K562 (cell line): ENCODE measurements at regions of chr3 and their contacts with region 1.

Region 1: DNA sequence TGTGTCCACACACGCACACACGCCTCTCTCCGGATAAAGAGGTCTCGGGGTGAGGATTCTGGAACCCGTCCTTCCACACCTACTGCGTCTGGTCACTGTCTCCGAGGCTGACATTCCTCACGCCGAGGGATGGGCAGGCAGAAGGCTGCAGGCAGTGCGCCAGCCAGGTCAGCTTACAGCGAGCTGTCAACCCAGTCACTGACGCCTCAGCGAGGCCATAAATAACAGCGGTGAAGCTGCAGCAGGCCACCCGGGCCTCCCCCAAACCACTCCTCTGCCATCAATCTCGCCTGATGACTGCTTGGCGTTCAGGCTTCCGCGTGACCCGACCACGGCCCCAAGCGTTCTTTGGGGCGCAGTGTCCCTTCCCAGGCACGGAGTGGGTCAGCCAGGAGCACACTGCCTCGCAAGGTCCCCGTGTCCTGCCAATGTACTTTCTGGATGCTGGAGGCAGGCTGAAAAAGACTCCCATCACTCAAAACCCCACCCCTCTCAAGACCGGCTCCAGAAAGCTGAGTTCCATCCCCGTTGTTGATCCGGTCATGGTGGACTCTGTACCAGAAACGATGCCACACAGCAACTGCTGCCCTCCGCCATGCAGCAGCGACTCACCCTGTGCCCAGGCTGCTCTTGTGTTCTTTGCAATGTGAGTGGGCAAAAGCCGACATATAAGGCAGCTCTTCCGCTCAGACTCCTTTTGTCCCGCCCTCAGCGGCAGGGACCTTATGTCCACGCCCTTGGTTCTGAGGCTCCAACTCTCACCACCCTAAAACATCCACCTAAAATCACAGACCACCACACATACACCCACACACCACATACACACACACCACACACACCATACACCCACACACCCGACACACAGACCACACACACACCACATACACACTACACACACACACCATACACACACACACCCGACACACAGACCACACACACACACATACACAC is 27.1 kb downstream of the CPN2 start:
- DNase-seq: peak; percentile 75 to 93 (median 84)
- ATAC-seq: peak; percentile 94
- H3K4me3 ChIP-seq: peak overlapping the region; percentile 37
- H3K27ac ChIP-seq: peak overlapping the region; percentile 42; the same call in 2 of the 3 replicates
- H3K4me1 ChIP-seq: peaks cover 13 to 54% of the 10 kb centered on the region in 2 experiments; a peak in 4 of 5 replicates
- H3K27me3 ChIP-seq: peaks cover 0 to 23% of the 10 kb centered on the region in 2 experiments; a peak in 3 of 5 replicates
- CTCF ChIP-seq: peak in 2 of 3 experiments; percentile 13 to 19; a peak in 2 of 6 replicates
- EP300 ChIP-seq: peak; percentile 82
- POLR2A ChIP-seq: no peak
- RAD21 ChIP-seq: peak; percentile 11 to 56; a peak in 2 of 4 replicates

Region 2: GRCh38 chr3:193592944-193593667 is 731.0 kb before region 1 on chr3 and contains the start of gene OPA1:
- CTCF ChIA-PET with region 1: no interaction called
- POLR2A ChIA-PET with region 1: no interaction called
- in situ Hi-C with region 1: no loop called
- intact Hi-C with region 1: loop called (anchors 10 kb)
- DNase-seq: peak; percentile 95 to 99 (median 96)
- ATAC-seq: peak; percentile 96
- H3K4me3 ChIP-seq: peak within 1 kb of the TSS; percentile 80
- H3K27ac ChIP-seq: peak within 1 kb of the TSS; percentile 84
- H3K4me1 ChIP-seq: peaks cover 5 to 22% of the 10 kb centered on the region in 2 experiments; a peak in 4 of 5 replicates
- H3K27me3 ChIP-seq: no peaks in the 10 kb centered on the region
- CTCF ChIP-seq: peak; percentile 0 to 39 (median 39); a peak in 3 of 6 replicates
- EP300 ChIP-seq: peak; percentile 58
- POLR2A ChIP-seq: peak; percentile 90
- RAD21 ChIP-seq: no peak
- polyA plus RNA-seq, gene OPA1: 19.7 to 30.8 TPM

Region 3: DNA sequence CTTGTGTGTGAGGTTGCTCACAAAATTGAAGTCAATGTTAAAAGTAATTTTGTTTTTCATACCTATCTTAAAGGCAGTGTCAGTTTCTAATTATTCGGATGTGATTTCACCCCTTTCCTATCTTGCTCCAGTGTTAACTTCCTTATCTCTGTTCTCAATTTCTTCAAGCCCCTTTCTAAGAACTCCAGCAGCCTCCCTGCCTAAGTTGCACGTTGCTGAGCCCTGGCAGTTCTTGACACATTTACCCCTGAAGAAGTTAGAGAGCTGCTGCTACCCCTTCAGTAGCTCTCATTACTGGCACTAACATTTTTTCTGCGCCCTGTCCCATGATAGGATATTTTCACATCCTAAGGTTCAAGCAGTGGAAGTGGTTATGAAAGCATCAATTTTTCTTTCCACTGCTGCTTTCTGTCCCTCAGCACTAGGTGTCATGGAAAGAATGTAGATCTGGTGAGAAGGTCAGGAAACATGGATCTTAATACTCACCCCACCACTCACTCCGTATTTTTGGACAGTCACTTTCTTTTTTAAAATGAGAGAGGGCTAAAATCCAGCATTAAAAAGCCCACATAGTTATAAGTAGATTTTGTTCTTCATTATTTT is 668.1 kb before region 1 on chr3:
- CTCF ChIA-PET with region 1: interaction called, 4 read pairs
- POLR2A ChIA-PET with region 1: interaction called, 3 read pairs
- in situ Hi-C with region 1: loop called (anchors 10 kb)
- intact Hi-C with region 1: loop called (anchors 5 kb)
- DNase-seq: peak in 2 of 4 experiments; percentile 21 to 65
- ATAC-seq: peak; percentile 67
- H3K4me3 ChIP-seq: no peak overlapping the region; the same call in 1 of the 2 replicates
- H3K27ac ChIP-seq: peak overlapping the region; percentile 87
- H3K4me1 ChIP-seq: peaks cover 4 to 43% of the 10 kb centered on the region in 2 experiments
- H3K27me3 ChIP-seq: no peaks in the 10 kb centered on the region
- CTCF ChIP-seq: peak in 1 of 3 experiments; percentile 46; a peak in 2 of 6 replicates
- EP300 ChIP-seq: no peak; the same call in 1 of the 2 replicates
- POLR2A ChIP-seq: no peak
- RAD21 ChIP-seq: peak; percentile 39 to 47; a peak in 3 of 4 replicates